CD8-positive, alpha-beta T cell (primary cell): ENCODE measurements at regions of chr20 and their contacts with region 1.

Region 1: DNA sequence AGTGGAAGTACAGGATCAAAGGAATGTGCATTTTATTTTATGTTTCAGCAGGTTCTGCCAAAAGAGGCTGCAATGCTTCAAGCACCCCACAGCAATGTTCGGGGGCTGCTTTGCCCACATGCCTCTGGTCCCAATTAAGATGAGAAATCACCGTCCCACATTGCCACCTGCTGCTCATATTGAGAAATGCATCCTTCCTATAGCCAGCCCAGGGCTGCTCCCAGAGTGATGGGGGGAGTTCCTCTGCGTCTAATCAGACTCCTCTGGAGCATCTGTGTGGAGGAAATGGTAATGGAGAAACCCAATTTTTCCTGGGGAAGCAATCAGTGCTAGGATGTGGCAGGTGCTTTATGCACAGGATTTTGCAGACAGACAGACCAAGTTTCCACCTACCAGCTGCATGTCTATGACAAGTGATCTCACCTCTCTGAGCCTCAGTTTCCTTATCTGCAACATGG is 33.7 kb downstream of the PTGIS start:
- DNase-seq: peak; percentile 36 to 73 (median 58)
- ATAC-seq: peak; percentile 80
- H3K4me3 ChIP-seq: no peak overlapping the region
- H3K4me3 Mint-ChIP-seq: no peak overlapping the region
- H3K27ac ChIP-seq: no peak overlapping the region
- H3K27ac Mint-ChIP-seq: no peak overlapping the region
- H3K4me1 ChIP-seq: no peaks in the 10 kb centered on the region
- H3K4me1 Mint-ChIP-seq: peaks cover 12% of the 10 kb centered on the region
- H3K27me3 ChIP-seq: peaks cover 0 to 2% of the 10 kb centered on the region in 2 experiments
- H3K27me3 Mint-ChIP-seq: peaks cover 14% of the 10 kb centered on the region
- CTCF ChIP-seq: peak; percentile 83

Region 2: DNA sequence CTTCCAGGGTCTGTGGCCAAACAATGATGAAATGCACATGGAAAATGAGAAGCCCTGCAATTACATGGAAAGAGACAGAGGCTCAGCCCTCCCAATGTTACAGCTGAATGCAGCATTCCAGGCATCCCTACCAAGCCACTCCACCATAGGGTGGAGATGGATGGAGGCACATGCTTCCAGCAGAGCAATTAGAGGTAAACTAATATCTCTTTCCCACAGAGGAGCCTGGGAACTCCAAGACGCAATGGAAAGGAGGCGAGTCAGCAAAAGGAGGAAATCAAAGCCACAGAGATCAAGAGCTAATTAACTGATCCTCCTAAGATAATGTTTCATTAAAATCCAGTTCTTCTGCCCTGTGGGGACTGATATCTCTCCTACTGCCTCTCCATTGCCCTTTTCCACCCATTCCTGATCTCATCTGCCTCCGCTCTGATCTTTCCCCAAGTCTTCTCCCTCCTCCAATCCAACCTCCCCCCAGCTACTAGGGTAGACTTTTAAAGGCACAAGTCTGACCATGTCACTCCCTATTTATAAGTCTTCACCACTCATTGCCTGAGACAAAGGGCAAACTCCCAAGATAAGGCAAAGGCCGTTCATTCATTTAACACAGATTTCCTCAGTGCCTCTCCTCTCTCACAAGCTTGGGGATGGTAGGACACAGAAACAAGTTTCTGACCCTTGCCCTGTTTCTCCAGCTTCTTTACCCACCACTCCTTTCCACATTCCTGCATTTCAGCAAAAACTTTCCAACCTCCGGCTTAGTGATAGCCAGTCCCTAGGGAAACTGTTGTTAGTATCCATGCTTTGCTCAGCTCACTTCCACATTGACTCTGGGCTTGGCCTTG is 37.5 kb before region 1 on chr20:
- CTCF ChIA-PET with region 1: no interaction called
- POLR2A ChIA-PET with region 1: no interaction called
- intact Hi-C with region 1: no loop called
- DNase-seq: no peak
- ATAC-seq: no peak
- H3K4me3 ChIP-seq: no peak overlapping the region
- H3K4me3 Mint-ChIP-seq: no peak overlapping the region
- H3K27ac ChIP-seq: no peak overlapping the region
- H3K27ac Mint-ChIP-seq: no peak overlapping the region
- H3K4me1 ChIP-seq: no peaks in the 10 kb centered on the region
- H3K4me1 Mint-ChIP-seq: no peaks in the 10 kb centered on the region
- H3K27me3 ChIP-seq: peaks cover 0 to 3% of the 10 kb centered on the region in 2 experiments
- H3K27me3 Mint-ChIP-seq: peaks cover 25% of the 10 kb centered on the region
- CTCF ChIP-seq: no peak

Region 3: GRCh38 chr20:49846206-49846807 is 312.0 kb after region 1 on chr20:
- CTCF ChIA-PET with region 1: interaction called, 6 read pairs
- POLR2A ChIA-PET with region 1: no interaction called
- intact Hi-C with region 1: loop called in 1 of 2 experiments (anchors 1 kb)
- DNase-seq: peak in 7 of 9 experiments; percentile 33 to 76 (median 55)
- ATAC-seq: peak; percentile 73
- H3K4me3 ChIP-seq: no peak overlapping the region
- H3K4me3 Mint-ChIP-seq: no peak overlapping the region
- H3K27ac ChIP-seq: no peak overlapping the region
- H3K27ac Mint-ChIP-seq: no peak overlapping the region
- H3K4me1 ChIP-seq: no peaks in the 10 kb centered on the region
- H3K4me1 Mint-ChIP-seq: peaks cover 9% of the 10 kb centered on the region
- H3K27me3 ChIP-seq: no peaks in the 10 kb centered on the region
- H3K27me3 Mint-ChIP-seq: no peaks in the 10 kb centered on the region
- CTCF ChIP-seq: peak; percentile 81